ENCODE measurements at regions of chr22 and their contacts with region 1.

Region 1: DNA sequence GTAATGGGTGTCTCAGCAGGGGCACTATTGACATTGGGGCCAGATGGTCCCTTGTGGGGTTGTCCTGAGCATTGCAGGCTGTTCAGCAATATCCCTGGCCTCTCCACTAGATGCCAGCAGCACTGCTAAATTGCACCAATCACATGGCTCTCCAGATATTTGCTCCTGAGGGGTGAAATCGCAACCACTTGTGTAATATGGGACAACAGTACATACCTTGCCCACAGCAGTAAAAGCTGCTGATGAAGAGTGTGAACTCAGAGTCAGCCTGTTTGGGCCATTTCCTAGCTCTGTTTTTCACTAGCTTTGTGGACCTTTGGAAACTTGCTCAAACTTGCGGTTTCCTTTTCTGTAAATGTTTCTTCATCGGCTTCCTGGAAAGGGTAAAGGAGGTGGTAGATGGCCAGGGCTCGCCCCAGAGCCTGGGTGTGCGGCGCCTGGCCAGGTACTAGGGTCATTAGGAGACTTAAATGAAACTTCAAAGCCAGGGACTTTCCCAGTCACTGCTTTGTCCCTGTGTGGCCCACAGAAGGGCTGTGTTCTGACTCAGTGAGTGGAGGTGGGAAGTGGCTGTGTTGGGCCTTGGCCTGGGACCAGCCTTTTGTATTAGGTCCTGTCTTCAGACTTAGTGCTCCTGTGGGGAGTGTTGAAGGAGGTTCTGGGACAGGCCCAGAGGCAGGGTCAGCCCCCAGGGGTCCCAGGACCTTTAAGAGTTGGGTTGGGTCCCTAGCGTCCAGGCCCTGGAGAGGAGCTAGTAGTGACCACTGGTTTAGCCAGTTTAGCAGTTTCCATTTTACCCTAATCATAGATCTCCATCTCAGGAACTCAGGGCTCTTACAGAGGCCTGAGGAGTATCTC is 13.1 kb downstream of the NCF4 start:
- DNase-seq: peak; percentile 34
- H3K4me3 ChIP-seq: no peak overlapping the region
- H3K27ac ChIP-seq: no peak overlapping the region
- H3K4me1 ChIP-seq: peaks cover 5% of the 10 kb centered on the region
- H3K27me3 ChIP-seq: no peaks in the 10 kb centered on the region
- CTCF ChIP-seq: peak; percentile 7 to 20 (median 15)
- POLR2A ChIP-seq: no peak

Region 2: DNA sequence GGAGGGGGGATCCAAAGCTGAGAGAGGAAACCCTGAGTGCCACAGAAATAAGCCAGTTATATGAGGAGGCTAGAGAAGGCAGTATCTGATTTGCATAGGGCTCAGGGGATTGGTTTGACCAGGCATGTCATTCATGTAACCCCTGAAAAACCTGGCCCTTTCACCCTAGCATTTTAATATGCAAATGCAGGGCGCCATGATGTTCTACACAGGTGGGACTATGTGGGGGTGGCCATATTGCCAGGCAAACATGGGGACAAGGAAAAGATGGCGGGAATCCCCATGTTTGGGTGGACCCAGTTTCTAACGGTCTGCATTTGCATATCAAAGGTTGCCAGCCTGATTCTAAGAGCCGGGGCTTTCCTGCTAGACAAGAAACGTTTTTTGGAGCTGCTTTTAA is 66.8 kb after region 1 on chr22:
- intact Hi-C with region 1: no loop called
- DNase-seq: no peak
- H3K4me3 ChIP-seq: no peak overlapping the region
- H3K27ac ChIP-seq: no peak overlapping the region
- H3K4me1 ChIP-seq: no peaks in the 10 kb centered on the region
- H3K27me3 ChIP-seq: no peaks in the 10 kb centered on the region
- CTCF ChIP-seq: no peak
- POLR2A ChIP-seq: no peak

Region 3: GRCh38 chr22:36977947-36978660 is 104.2 kb after region 1 on chr22:
- intact Hi-C with region 1: loop called (anchors 10 kb)
- DNase-seq: peak; percentile 95
- H3K4me3 ChIP-seq: peak overlapping the region; percentile 17 to 42
- H3K27ac ChIP-seq: no peak overlapping the region
- H3K4me1 ChIP-seq: no peaks in the 10 kb centered on the region
- H3K27me3 ChIP-seq: no peaks in the 10 kb centered on the region
- CTCF ChIP-seq: peak; percentile 79 to 93 (median 89)
- POLR2A ChIP-seq: no peak

Measured in testis (tissue), 5 donors.